Activated T-helper 1 cell treated with anti-CD3 and anti-CD28 coated beads, Interleukin-12 subunit alpha, Interleukin-12 subunit beta, Interleukin-2, Interleukin-4 antibody, amounts not matched to agents 30 ng/mL and 10 ng/mL and 1 ng/mL, durations not matched to agents 14 hours and 24 hours and 36 hours (primary cell): ENCODE measurements at regions of chr1 and their contacts with region 1.

Region 1: GRCh38 chr1:200139661-200140250 is 112.2 kb downstream of the NR5A2 start:
- DNase-seq: no peak
- H3K4me3 Mint-ChIP-seq: no peak overlapping the region
- H3K27ac Mint-ChIP-seq: no peak overlapping the region
- H3K4me1 Mint-ChIP-seq: peaks cover 29% of the 10 kb centered on the region
- H3K27me3 Mint-ChIP-seq: peaks cover 11% of the 10 kb centered on the region

Region 2: GRCh38 chr1:198880818-198881597 is 1258.7 kb before region 1 on chr1:
- intact Hi-C with region 1: no loop called
- DNase-seq: no peak
- H3K4me3 Mint-ChIP-seq: no peak overlapping the region
- H3K27ac Mint-ChIP-seq: peak overlapping the region; percentile 71
- H3K4me1 Mint-ChIP-seq: peaks cover 59% of the 10 kb centered on the region
- H3K27me3 Mint-ChIP-seq: no peaks in the 10 kb centered on the region

Region 3: DNA sequence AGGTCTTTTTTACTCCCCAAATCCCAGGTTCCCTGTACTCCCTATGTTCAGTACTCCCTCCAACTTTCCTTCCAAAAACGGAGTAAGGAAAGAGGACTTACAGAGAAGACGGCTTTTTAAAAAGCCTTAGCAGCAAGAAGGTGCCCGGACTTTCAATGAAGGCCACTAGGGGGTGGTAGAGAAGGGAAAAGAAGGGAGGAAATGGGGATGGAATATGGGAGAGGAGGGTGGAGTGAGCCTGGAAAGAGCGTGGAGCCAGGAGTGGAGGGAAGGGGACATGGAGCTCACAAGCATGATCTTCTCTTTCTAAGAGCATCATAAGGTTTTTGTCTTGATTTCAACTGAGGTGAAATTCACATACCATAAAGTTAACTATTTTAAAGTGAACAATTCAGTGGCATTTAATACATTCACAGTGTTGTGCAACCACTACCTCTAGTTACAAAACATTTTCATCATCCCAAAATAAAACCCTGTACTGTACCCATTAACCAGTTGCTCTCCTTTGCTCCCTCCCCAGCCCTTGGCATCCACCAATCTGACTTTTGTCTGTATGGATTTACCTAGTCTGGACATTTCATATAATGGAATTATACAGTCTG is 140.2 kb after region 1 on chr1:
- intact Hi-C with region 1: loop called (anchors 1 kb)
- DNase-seq: no peak
- H3K4me3 Mint-ChIP-seq: no peak overlapping the region
- H3K27ac Mint-ChIP-seq: no peak overlapping the region
- H3K4me1 Mint-ChIP-seq: no peaks in the 10 kb centered on the region
- H3K27me3 Mint-ChIP-seq: peaks cover 10% of the 10 kb centered on the region

Region 4: GRCh38 chr1:200302192-200302920 is 162.6 kb after region 1 on chr1:
- intact Hi-C with region 1: loop called (anchors 1 kb)
- DNase-seq: peak; percentile 53
- H3K4me3 Mint-ChIP-seq: peak overlapping the region; percentile 83
- H3K27ac Mint-ChIP-seq: no peak overlapping the region
- H3K4me1 Mint-ChIP-seq: peaks cover 23% of the 10 kb centered on the region
- H3K27me3 Mint-ChIP-seq: peaks cover 17% of the 10 kb centered on the region